Activated T-helper 1 cell treated with anti-CD3 and anti-CD28 coated beads, Interleukin-12 subunit alpha, Interleukin-12 subunit beta, Interleukin-2, Interleukin-4 antibody, amounts not matched to agents 30 ng/mL and 10 ng/mL and 1 ng/mL, durations not matched to agents 14 hours and 24 hours and 36 hours (primary cell): ENCODE measurements at regions of chr1 and their contacts with region 1.

Region 1: DNA sequence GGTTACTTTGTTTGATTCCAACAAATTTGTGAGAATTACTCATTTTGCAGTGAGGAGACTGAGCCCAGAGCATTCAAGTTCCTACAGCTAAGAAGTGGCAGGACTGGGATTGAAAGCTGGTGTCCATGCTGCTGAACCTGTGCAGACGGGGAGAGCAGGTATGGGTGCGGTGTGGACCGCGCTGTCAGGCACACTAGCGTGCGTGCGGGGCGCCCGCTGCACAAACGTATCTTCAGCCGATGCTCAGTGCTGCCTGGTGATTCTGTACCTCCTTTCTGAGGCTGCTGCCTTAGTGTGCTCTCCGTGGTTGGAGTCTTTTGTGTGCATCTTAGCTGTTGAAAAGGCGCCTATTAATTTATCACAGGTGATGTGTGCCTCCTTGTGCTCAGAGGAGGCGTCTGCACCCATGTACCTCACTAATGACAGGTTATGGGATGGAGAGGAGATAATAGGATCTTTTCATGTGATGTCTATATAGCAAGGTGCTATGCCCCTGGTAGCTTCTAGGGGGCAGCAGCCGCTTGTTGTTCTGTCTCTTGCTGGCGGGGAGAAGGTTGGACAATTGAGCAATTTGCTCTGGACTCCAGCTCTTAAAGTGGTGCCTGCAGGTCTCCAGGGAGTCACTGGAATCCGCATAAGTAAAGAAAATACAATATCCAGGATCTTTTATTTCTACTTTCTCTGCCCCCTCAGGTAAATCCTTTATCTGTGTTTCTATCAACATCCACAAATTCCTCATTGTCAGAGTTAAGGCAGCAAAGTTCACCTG is 32.5 kb downstream of the PEX14 start:
- DNase-seq: peak; percentile 27
- H3K4me3 Mint-ChIP-seq: no peak overlapping the region
- H3K27ac Mint-ChIP-seq: no peak overlapping the region
- H3K4me1 Mint-ChIP-seq: peaks cover 41% of the 10 kb centered on the region
- H3K27me3 Mint-ChIP-seq: no peaks in the 10 kb centered on the region

Region 2: GRCh38 chr1:10398734-10399623 is 108.3 kb before region 1 on chr1 and contains the start of gene PGD:
- intact Hi-C with region 1: no loop called
- DNase-seq: peak; percentile 98
- H3K4me3 Mint-ChIP-seq: peak within 1 kb of the TSS; percentile 92
- H3K27ac Mint-ChIP-seq: peak within 1 kb of the TSS; percentile 77
- H3K4me1 Mint-ChIP-seq: peaks cover 25% of the 10 kb centered on the region
- H3K27me3 Mint-ChIP-seq: no peaks in the 10 kb centered on the region
- total RNA-seq, gene PGD: 131 and 142 TPM in 2 replicates

Region 3: DNA sequence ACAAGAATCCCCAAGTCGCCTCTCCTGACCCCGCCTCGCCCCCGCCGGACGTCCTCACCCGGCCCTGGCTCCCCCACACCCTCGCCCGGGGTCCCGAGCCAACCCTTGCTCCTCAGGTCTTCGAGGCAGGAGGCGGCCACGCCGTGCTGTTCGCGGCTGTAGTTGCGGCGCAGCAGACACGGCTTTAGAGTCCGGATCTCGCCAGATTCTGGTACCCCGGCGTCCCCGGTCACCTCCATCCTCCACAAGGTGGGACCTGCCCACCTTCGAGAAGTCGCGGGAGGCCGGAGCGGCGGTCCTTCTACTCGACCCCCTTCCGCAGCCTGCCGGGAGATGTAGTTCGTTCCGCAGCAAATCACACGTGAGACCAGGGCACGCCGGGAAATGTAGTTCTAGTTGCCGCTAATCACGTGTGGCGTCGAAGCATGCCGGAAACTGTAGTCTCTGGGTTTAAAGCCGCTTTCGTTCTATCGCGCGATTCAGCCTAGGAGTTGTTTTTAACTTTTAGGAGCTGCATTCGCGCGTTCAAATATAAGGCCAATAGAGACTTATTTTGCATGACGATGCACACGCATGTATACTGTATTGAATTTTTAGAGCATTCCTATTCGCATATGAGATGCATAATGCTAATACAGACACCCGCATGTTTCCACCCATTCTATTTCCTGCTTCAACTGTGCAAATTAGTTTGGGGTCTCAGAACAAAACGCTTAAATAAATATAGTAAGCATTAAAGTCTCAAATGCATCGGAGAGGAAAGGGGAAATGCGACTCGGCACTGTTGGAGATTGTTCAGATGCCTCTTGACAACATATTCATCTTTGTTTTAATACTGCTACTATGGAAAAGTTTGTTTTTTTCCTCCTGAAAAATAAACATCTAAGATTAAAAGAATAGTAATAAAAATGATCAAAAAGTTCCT is 34.8 kb before region 1 on chr1 and contains the start of gene DFFA:
- intact Hi-C with region 1: loop called (anchors 1 kb)
- DNase-seq: peak; percentile 90
- H3K4me3 Mint-ChIP-seq: peak within 1 kb of the TSS; percentile 89
- H3K27ac Mint-ChIP-seq: peak within 1 kb of the TSS; percentile 85
- H3K4me1 Mint-ChIP-seq: peaks cover 45% of the 10 kb centered on the region
- H3K27me3 Mint-ChIP-seq: no peaks in the 10 kb centered on the region
- total RNA-seq, gene DFFA: 54.7 and 60.1 TPM in 2 replicates

Region 4: GRCh38 chr1:10482810-10483209 is 24.5 kb before region 1 on chr1:
- intact Hi-C with region 1: no loop called
- DNase-seq: no peak
- H3K4me3 Mint-ChIP-seq: no peak overlapping the region
- H3K27ac Mint-ChIP-seq: no peak overlapping the region
- H3K4me1 Mint-ChIP-seq: peaks cover 6% of the 10 kb centered on the region
- H3K27me3 Mint-ChIP-seq: no peaks in the 10 kb centered on the region

Region 5: GRCh38 chr1:10694633-10695627 is 187.6 kb after region 1 on chr1:
- intact Hi-C with region 1: loop called (anchors 2 kb)
- DNase-seq: peak; percentile 74
- H3K4me3 Mint-ChIP-seq: peak overlapping the region; percentile 81
- H3K27ac Mint-ChIP-seq: peak overlapping the region; percentile 81
- H3K4me1 Mint-ChIP-seq: peaks cover 24% of the 10 kb centered on the region
- H3K27me3 Mint-ChIP-seq: peaks cover 23% of the 10 kb centered on the region

Region 6: DNA sequence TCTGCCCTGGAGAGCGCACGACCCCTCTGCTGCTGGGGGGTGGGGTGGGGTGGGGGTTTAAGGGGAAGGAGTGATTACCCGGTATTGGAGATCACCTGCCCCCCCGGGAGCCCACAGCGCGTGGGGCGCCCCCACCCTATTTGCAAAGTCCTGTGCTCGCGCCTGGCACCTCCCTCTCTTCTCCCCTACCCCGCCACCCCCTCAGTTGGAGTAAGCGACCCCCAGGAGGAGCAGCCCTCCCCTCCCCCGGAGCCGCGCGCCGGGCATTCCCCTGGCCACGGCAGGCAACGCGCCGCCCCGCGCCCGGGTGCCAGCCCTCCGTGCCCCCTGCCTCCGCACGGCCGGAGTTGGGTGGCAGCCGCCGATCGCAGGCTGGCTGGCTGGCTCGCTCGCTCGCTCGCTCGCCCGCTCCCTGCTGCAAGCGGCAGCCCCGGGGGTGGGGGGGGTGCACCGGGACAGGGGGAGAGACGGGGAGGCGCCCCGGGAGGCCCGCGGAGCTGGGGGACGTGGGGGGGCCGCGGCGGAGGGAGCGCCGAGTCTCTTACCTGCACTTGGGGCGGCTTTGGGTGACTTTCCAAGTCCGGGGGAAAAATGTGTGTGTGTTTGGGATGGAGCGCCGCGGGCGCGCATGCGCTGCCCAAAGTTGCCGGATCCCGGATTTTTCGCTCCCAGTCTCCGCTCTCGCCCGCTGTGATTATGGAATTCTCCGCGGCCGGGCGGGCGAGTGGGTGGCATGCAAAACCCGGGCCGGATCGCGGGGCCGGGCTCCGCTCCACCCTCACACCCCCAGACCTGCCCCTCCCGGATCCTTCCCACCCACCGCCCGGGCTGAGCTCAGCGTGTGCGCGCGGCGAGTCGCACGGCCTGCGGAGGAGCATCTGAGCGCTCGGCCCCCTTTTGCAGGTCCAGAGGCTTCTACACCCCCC is 289.0 kb after region 1 on chr1 and contains the start of gene CASZ1:
- intact Hi-C with region 1: loop called (anchors 5 kb)
- DNase-seq: no peak
- H3K4me3 Mint-ChIP-seq: no peak within 1 kb of the TSS
- H3K27ac Mint-ChIP-seq: no peak within 1 kb of the TSS
- H3K4me1 Mint-ChIP-seq: peaks cover 5% of the 10 kb centered on the region
- H3K27me3 Mint-ChIP-seq: peaks cover 60% of the 10 kb centered on the region
- total RNA-seq, gene CASZ1: 8.0 and 11.7 TPM in 2 replicates

Region 7: DNA sequence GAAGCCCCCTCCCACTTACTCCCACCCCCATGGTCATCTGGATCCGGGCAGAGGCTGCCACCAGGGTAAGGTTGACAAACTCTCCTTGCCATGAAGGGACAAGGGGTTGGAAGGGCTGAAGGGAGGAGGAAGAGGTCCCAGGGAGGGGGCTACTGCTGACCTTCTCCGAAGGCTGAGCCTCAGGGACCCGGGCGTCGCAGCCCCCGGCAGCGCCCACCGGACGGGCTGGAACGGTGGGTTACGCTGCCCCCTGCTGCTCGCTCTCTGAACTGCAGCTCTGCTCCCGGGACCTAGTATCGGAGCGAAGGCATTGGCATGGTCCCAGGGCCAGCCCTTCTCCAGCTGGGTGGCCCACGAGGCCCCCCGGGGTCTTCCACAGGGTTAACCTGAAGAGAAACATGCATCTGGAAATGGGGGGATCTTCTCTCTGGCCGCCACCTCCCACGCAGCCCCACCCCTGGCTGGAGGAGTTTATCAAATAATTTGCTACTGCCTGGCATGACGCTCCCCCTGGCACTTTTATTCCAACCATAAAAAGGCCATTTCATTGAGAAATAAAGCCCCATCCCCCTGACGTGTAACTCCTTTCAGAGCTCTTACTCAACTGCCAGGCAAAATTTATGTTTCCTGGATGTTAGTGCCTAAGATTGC is 434.7 kb after region 1 on chr1:
- intact Hi-C with region 1: loop called (anchors 1 kb)
- DNase-seq: peak; percentile 42
- H3K4me3 Mint-ChIP-seq: no peak overlapping the region
- H3K27ac Mint-ChIP-seq: no peak overlapping the region
- H3K4me1 Mint-ChIP-seq: peaks cover 31% of the 10 kb centered on the region
- H3K27me3 Mint-ChIP-seq: peaks cover 56% of the 10 kb centered on the region